Activated CD8-positive, alpha-beta T cell treated with anti-CD3 and anti-CD28 coated beads for 36 hours (primary cell): ENCODE measurements at regions of chr12 and their contacts with region 1.

Region 1: GRCh38 chr12:50825372-50825838 is 17.3 kb upstream of the TMPRSS12 start:
- DNase-seq: no peak
- ATAC-seq: peak; percentile 74
- H3K4me3 Mint-ChIP-seq: no peak overlapping the region
- H3K27ac Mint-ChIP-seq: peak overlapping the region; percentile 71
- H3K4me1 Mint-ChIP-seq: peaks cover 8% of the 10 kb centered on the region
- H3K27me3 Mint-ChIP-seq: no peaks in the 10 kb centered on the region
- CTCF ChIP-seq: peak; percentile 75

Region 2: DNA sequence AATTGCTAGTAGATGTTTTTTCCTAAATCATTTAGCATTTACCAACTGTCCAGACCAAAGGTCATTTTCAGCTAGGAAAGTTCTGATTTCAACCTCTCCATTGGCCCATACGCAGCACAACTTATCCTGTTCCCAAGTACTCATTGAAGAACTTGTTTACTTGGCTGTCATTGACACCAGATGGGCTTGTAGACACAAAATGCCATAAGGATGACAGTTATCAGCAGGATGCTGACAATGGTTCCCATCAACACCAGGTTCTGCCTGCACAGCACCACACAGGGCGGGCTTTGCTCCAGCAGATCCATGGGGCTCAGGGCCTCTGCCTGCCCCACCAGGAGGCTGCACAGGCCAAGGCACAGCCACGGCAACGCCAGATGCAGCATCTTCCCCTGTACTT is 19.2 kb before region 1 on chr12:
- CTCF ChIA-PET with region 1: no interaction called
- POLR2A ChIA-PET with region 1: no interaction called
- intact Hi-C with region 1: no loop called
- DNase-seq: no peak
- ATAC-seq: no peak
- H3K4me3 Mint-ChIP-seq: no peak overlapping the region
- H3K27ac Mint-ChIP-seq: no peak overlapping the region
- H3K4me1 Mint-ChIP-seq: no peaks in the 10 kb centered on the region
- H3K27me3 Mint-ChIP-seq: no peaks in the 10 kb centered on the region
- CTCF ChIP-seq: no peak

Region 3: DNA sequence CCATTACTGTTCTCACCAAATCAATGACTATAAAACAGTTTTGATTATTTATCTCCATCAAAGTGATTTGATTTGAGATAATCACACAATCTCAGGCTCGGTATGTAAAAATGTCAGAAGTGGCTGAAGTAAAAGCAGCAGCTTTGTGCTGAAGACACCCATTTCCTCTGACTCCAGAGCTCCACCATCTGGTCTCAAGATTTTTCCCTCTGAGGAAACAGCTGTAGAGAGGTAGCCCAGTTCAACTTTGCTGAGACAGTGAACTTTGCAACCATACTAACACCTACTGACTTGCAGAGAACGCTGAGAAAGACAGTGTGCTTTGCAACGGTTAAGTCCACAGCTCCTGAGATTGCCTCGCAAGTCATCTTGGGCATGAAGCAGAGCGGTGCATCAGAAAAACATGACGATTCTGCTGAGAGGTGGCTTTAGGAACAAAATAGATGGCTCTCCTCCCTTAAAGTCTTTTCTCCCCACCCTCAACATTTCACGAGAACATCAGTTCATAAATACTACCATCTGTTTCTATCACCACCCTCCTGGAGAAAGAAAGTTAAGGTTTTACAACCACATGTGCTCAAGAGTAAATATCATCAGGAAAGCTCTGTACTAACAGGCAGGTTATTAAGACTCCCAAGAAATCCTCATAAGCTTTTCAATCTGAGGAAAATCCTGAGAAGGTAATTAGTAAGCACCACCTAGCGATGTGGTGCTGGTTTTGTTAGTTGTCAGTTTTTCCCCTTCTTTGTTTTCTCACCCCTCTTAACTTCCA is 161.7 kb after region 1 on chr12:
- CTCF ChIA-PET with region 1: interaction called, 43 read pairs
- POLR2A ChIA-PET with region 1: interaction called, 3 read pairs
- intact Hi-C with region 1: loop called (anchors 10 kb)
- DNase-seq: peak; percentile 40
- ATAC-seq: peak; percentile 62
- H3K4me3 Mint-ChIP-seq: no peak overlapping the region
- H3K27ac Mint-ChIP-seq: peak overlapping the region; percentile 73
- H3K4me1 Mint-ChIP-seq: peaks cover 44% of the 10 kb centered on the region
- H3K27me3 Mint-ChIP-seq: no peaks in the 10 kb centered on the region
- CTCF ChIP-seq: peak; percentile 25

Region 4: GRCh38 chr12:50992819-50993218 is 167.4 kb after region 1 on chr12:
- CTCF ChIA-PET with region 1: interaction called, 43 read pairs
- POLR2A ChIA-PET with region 1: interaction called, 3 read pairs
- intact Hi-C with region 1: loop called (anchors 10 kb)
- DNase-seq: no peak
- ATAC-seq: no peak
- H3K4me3 Mint-ChIP-seq: no peak overlapping the region
- H3K27ac Mint-ChIP-seq: no peak overlapping the region
- H3K4me1 Mint-ChIP-seq: peaks cover 15% of the 10 kb centered on the region
- H3K27me3 Mint-ChIP-seq: no peaks in the 10 kb centered on the region
- CTCF ChIP-seq: no peak